Heart left ventricle (tissue), 16 donors: ENCODE measurements at regions of chr3 and their contacts with region 1.

Region 1: GRCh38 chr3:168847291-168847883 is 751.7 kb upstream of the GOLIM4 start:
- DNase-seq: peak in 1 of 5 donors; percentile 5
- ATAC-seq: peak in 1 of 4 donors; percentile 42
- H3K4me3 ChIP-seq: no peak overlapping the region
- H3K27ac ChIP-seq: no peak overlapping the region
- H3K4me1 ChIP-seq: peaks cover 0 to 3% (median 0%) of the 10 kb centered on the region in 12 donors
- H3K27me3 ChIP-seq: peaks cover 0 to 11% (median 0%) of the 10 kb centered on the region in 9 donors
- CTCF ChIP-seq: peak; percentile 44 to 75 (median 67)
- POLR2A ChIP-seq: no peak

Region 2: DNA sequence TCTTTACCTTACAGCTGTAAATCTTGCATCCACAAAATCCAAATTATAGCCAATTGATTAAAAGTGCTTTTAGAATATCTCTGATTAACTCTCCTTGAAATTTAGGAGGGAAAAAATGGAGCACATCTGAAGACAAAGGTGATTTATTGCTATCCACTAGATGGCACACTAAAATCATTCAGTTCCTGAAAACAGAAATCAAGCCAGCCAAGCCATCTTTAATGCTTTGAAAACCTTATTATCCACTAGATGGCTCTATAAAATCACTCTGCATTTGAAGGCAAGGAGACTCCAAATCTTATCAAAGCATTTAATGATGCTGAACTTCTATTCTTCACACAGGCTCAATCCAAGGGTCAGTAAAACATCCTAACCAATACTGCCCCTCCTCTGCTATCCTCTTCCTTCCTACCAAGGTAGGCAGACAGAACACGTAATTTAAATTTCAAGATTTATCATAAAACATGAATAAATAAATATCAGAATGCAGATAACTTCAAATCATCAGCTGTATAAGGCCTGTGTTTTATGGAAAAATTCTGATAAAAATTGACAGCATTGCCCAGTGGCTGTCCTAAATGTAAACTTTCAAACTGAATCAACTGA is 800.1 kb before region 1 on chr3:
- intact Hi-C with region 1: loop called in 3 of 10 experiments (anchors 10 kb)
- DNase-seq: no peak
- ATAC-seq: peak; percentile 33 to 67 (median 64)
- H3K4me3 ChIP-seq: no peak overlapping the region
- H3K27ac ChIP-seq: no peak overlapping the region
- H3K4me1 ChIP-seq: peaks cover 0 to 62% (median 34%) of the 10 kb centered on the region in 12 donors
- H3K27me3 ChIP-seq: no peaks in the 10 kb centered on the region
- CTCF ChIP-seq: peak; percentile 67 to 96 (median 90)
- POLR2A ChIP-seq: no peak

Region 3: GRCh38 chr3:168213920-168214319 is 633.5 kb before region 1 on chr3:
- intact Hi-C with region 1: loop called (anchors 1 to 5 kb)
- DNase-seq: no peak
- ATAC-seq: no peak
- H3K4me3 ChIP-seq: peak overlapping the region in 1 of 12 donors; percentile 23
- H3K27ac ChIP-seq: no peak overlapping the region
- H3K4me1 ChIP-seq: peaks cover 0 to 4% (median 0%) of the 10 kb centered on the region in 12 donors
- H3K27me3 ChIP-seq: no peaks in the 10 kb centered on the region
- CTCF ChIP-seq: no peak
- POLR2A ChIP-seq: no peak

Region 4: GRCh38 chr3:168511428-168512014 is 335.9 kb before region 1 on chr3:
- intact Hi-C with region 1: loop called (anchors 2 to 5 kb)
- DNase-seq: no peak
- ATAC-seq: no peak
- H3K4me3 ChIP-seq: no peak overlapping the region
- H3K27ac ChIP-seq: no peak overlapping the region
- H3K4me1 ChIP-seq: no peaks in the 10 kb centered on the region
- H3K27me3 ChIP-seq: peaks cover 0 to 7% (median 0%) of the 10 kb centered on the region in 9 donors
- CTCF ChIP-seq: peak; percentile 31 to 62 (median 50)
- POLR2A ChIP-seq: no peak

Region 5: DNA sequence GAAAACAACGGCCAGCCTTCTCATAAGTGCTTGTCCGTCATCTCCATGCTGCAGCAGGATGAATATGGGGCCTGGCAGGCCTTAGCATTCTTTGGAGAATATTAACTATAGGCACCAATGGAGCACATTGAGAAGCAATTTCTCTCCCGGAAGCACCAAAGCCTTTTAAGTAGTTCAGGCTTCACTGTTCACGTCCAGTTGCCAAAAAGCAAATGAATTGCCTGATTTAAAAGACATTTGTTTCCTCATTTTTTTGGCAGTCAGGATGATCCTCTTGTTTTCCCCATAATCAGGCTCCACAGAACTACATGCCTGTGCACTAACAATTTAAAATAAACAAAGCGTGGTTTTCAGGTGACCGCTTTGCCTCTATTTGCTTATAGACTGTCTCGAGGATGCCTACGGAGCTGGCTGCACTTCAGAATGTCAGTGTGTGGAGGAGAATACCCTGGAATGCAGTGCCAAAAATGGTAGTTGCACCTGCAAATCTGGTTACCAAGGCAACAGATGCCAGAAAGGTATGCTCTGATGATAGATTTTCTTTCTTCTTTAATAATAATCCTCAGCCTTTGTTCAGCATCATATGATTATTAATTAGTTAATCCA is 26.5 kb before region 1 on chr3:
- intact Hi-C with region 1: loop called in 1 of 10 experiments (anchors 1 kb)
- DNase-seq: no peak
- ATAC-seq: peak in 1 of 4 donors; percentile 48
- H3K4me3 ChIP-seq: no peak overlapping the region
- H3K27ac ChIP-seq: no peak overlapping the region
- H3K4me1 ChIP-seq: peaks cover 0 to 18% (median 2%) of the 10 kb centered on the region in 12 donors
- H3K27me3 ChIP-seq: no peaks in the 10 kb centered on the region
- CTCF ChIP-seq: no peak
- POLR2A ChIP-seq: no peak